ENCODE measurements at regions of chr17 and their contacts with region 1.

Region 1: DNA sequence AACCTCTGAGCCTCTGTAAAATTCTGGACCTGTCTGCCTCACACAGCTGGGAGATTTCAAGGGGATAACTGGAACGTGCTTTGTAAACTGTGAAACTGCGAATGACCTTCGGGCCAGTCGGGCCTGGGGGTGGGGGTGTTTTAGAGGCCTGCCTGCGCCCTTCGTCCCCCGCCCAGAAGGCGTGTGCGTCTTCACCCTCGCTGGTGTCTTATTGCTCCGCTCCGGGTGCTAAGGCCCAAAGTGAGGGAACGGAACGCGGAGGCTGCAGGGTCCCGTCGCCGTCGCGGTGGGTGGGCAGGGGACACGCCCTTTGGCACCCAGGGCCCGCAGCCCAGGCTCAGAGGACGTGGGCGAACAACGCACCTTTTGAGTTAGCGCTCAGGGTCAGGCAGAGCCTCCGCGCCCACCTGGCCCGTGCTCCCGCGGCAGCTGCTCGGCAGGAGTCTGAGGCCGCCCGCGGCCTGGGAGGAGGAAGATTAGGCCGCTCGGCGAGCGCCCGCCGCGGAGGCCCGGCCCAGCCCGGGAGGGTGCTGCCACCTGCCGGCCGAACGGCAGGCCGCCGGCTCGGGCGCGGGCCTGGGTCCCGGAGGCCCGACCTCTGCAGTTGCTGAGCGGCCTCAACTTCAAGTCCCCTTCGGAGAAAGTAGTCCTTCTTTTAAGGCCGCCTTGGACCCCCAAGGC is 29.7 kb downstream of the DCAKD start:
- DNase-seq: no peak
- ATAC-seq: peak; percentile 86
- H3K4me3 ChIP-seq: no peak overlapping the region
- H3K27ac ChIP-seq: no peak overlapping the region
- H3K4me1 ChIP-seq: peaks cover 29% of the 10 kb centered on the region
- H3K27me3 ChIP-seq: peaks cover 0 to 6% of the 10 kb centered on the region in 2 experiments; a peak in 2 of 4 replicates
- CTCF ChIP-seq: peak; percentile 62 to 89 (median 74); a peak in 5 of 6 replicates
- EP300 ChIP-seq: no peak
- POLR2A ChIP-seq: peak; percentile 44; the same call in 1 of the 2 replicates
- RAD21 ChIP-seq: peak; percentile 74

Region 2: DNA sequence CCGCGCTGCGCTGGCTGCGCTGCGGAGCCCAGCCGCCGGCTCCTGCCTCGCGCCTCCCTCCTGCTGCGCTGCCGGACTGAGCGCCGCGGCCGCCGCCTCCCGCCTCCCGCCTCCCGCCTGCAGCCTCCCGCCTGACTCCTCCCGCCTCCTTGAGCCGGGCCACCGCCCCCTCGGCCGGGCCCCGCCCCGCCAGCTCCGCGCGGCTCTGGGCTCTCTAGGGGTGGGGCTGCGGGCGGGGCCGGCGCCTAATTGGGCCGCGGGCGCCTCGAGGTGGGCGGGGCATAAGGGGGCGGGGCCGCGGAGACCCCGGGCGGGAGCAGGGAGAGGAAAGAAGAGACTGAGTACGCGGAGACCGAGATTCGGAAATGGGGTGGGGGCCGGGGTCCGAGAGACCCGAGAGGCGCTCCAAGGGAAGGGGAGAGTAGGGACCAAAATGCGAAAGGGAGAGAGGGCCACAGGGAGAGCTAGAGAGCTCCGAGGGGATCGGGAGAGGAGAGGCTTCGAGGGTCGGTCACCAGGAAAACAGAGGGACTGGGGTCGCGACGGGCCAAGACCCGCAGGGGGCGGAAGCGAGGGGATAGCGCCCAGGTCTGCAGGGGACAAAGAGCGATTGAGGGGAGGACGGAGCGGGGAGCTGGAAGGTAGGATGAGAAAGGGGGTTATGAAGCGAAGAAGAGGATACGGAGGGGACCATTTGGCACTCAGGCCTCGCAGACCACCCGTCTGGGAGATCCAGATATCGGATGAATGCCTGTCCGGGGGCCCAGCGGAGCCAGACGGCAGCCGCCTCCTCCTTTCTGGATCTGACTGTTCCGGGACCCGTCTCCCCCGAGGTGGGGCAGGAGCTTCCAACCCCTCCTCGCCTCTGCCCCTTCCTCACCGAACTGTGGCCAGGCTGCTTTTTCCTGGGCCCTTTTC is 53.3 kb before region 1 on chr17 and contains the start of gene C1QL1:
- CTCF ChIA-PET with region 1: no interaction called
- POLR2A ChIA-PET with region 1: interaction called, 3 read pairs
- RAD21 ChIA-PET with region 1: no interaction called
- SMC1A ChIA-PET with region 1: no interaction called
- in situ Hi-C with region 1: no loop called
- intact Hi-C with region 1: loop called (anchors 5 kb)
- DNase-seq: no peak
- ATAC-seq: peak; percentile 99
- H3K4me3 ChIP-seq: peak within 1 kb of the TSS; percentile 69
- H3K27ac ChIP-seq: no peak within 1 kb of the TSS
- H3K4me1 ChIP-seq: peaks cover 6% of the 10 kb centered on the region; the same call in 1 of the 2 replicates
- H3K27me3 ChIP-seq: peaks cover 23 to 42% of the 10 kb centered on the region in 2 experiments
- CTCF ChIP-seq: no peak
- EP300 ChIP-seq: no peak
- POLR2A ChIP-seq: no peak
- RAD21 ChIP-seq: no peak
- polyA plus RNA-seq, gene C1QL1: not detected

Region 3: DNA sequence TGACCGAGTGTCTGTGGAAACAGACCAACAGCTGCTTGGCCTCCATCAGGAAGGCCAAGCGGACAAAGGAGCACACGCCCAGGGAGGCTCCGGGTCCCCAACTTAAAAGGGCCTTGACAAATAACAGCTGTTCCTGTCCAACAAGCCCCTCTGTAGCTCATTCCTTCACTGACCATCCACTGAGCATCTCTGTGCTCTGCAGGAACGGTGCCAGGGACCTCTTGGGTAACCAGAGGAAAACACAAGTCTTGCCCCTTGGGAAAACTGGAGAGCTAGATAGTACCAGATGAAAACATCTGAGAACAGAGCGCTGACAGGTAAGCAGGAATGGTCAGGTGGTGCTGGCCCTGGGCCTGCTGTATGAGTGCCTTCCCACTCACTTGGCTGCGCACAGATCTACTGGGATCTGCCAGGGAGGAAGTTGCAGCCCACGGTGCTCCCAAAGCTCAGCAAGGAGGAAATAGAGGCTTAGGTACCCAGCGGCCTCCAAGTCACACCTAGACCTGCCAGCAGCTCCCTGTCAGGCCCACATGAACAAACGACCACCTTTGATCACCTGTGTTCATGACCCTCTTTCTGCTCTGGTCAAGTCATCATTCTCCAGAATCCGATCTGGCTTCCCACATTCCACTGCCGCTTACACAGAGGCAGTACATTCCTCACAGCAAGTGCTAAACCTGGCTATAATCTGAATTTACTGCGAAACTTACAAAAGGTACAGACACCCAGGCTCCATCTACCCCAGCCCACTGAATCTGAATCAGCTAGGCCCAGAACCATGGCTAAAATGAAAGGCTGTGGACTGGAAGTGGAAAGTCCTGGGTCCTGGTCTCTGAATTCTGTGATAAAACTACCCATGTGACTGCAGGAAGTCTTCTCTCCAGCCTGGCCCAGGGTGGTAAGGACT is 17.2 kb after region 1 on chr17:
- CTCF ChIA-PET with region 1: interaction called, 24 read pairs
- POLR2A ChIA-PET with region 1: interaction called, 9 read pairs
- RAD21 ChIA-PET with region 1: interaction called, 26 read pairs
- SMC1A ChIA-PET with region 1: interaction called, 10 read pairs
- in situ Hi-C with region 1: no loop called
- intact Hi-C with region 1: no loop called
- DNase-seq: no peak
- ATAC-seq: no peak
- H3K4me3 ChIP-seq: no peak overlapping the region
- H3K27ac ChIP-seq: peak overlapping the region; percentile 69
- H3K4me1 ChIP-seq: peaks cover 6% of the 10 kb centered on the region
- H3K27me3 ChIP-seq: no peaks in the 10 kb centered on the region
- CTCF ChIP-seq: no peak
- EP300 ChIP-seq: no peak
- POLR2A ChIP-seq: no peak
- RAD21 ChIP-seq: no peak

Region 4: DNA sequence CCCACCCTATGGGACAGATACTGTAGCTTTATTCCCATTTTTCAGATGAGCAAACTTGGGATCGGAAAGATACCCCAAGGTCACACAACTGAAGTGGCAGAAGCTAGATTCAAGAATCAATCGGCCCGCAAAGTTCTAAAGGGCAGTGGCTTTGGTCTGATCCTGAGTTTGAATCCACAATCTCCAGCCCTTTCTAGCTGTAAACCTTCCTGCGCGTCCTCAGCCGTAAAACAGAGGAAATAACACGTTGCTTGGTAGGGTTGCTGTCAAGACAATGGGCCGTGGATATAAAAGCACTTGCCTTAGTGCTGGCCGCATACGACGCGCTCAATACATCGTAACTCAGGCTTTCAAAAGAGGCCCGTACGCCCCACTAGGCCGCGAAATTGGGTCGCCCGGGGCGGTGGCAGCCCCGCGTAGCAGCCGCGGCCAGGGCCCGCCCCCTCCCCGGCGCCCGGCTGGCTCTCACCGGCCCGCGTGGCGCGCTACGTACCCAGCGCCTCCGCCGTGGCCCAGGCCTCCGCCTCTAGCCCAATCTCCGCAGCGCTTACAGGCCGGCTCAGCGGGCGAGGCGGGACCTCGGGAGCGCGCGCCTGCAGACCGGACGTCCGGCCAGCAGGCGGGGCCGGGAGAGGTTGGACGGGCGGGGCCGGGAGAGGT is 29.4 kb after region 1 on chr17 and contains the start of gene DCAKD:
- CTCF ChIA-PET with region 1: interaction called, 58 read pairs
- POLR2A ChIA-PET with region 1: interaction called, 33 read pairs
- RAD21 ChIA-PET with region 1: interaction called, 15 read pairs
- SMC1A ChIA-PET with region 1: interaction called, 6 read pairs
- in situ Hi-C with region 1: no loop called
- intact Hi-C with region 1: loop called (anchors 2 kb)
- DNase-seq: no peak
- ATAC-seq: peak; percentile 97
- H3K4me3 ChIP-seq: peak within 1 kb of the TSS; percentile 76
- H3K27ac ChIP-seq: peak within 1 kb of the TSS; percentile 95
- H3K4me1 ChIP-seq: peaks cover 13% of the 10 kb centered on the region
- H3K27me3 ChIP-seq: no peaks in the 10 kb centered on the region
- CTCF ChIP-seq: no peak
- EP300 ChIP-seq: no peak
- POLR2A ChIP-seq: peak; percentile 77; the same call in 1 of the 2 replicates
- RAD21 ChIP-seq: no peak
- polyA plus RNA-seq, gene DCAKD: 11.6 to 11.7 TPM

Region 5: DNA sequence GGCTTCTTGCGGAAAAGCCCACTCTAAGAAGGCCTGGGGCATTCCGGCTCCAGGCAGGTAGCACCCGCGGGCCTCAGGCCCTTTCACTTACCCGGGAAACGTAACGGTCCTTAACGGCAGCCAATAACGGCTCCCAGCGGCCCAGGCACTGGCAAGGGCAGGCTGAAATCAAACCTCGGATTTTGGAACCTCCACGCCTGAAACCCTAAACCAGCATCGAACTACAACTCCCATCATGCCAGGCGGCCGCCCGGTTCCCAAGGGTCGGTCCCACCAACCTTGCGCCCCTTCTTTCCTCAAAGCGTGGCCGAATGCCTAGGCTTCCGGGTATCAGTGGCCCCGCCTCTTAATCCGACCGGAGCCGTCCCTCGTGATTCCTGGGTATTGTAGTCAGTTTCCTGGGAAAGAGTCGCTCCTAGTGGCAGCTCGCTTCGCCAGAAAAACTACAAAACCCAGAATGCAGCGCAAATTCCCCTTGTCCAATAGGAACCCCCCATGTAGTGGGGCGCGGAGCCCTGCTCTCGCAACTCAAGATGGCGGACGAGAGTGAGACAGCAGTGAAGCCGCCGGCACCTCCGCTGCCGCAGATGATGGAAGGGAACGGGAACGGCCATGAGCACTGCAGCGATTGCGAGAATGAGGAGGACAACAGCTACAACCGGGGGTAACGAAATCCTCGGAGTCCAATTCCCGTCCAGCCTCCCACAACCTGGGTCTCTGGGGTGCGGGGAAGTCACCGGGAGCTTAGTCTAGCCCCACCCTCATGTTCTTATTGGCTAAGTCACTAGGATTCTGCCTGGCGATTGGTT is 39.3 kb after region 1 on chr17 and contains the start of gene NMT1:
- CTCF ChIA-PET with region 1: interaction called, 6 read pairs
- POLR2A ChIA-PET with region 1: interaction called, 6 read pairs
- RAD21 ChIA-PET with region 1: interaction called, 8 read pairs
- SMC1A ChIA-PET with region 1: interaction called, 11 read pairs
- in situ Hi-C with region 1: no loop called
- intact Hi-C with region 1: no loop called
- DNase-seq: peak; percentile 99
- ATAC-seq: peak; percentile 90
- H3K4me3 ChIP-seq: peak within 1 kb of the TSS; percentile 84
- H3K27ac ChIP-seq: peak within 1 kb of the TSS; percentile 98
- H3K4me1 ChIP-seq: peaks cover 10% of the 10 kb centered on the region
- H3K27me3 ChIP-seq: no peaks in the 10 kb centered on the region
- CTCF ChIP-seq: no peak
- EP300 ChIP-seq: no peak
- POLR2A ChIP-seq: peak; percentile 98
- RAD21 ChIP-seq: no peak
- polyA plus RNA-seq, gene NMT1: 282 to 342 TPM

Measured in GM12878 (cell line).